Naive thymus-derived CD4-positive, alpha-beta T cell (primary cell): ENCODE measurements at regions of chr10 and their contacts with region 1.

Region 1: GRCh38 chr10:98134431-98135221 is at the start of gene R3HCC1L:
- DNase-seq: peak; percentile 87 to 95 (median 93)
- ATAC-seq: peak; percentile 98
- H3K4me3 ChIP-seq: peak within 1 kb of the TSS; percentile 91
- H3K4me3 Mint-ChIP-seq: peak within 1 kb of the TSS; percentile 78 to 95 (median 86)
- H3K27ac ChIP-seq: peak within 1 kb of the TSS; percentile 96
- H3K27ac Mint-ChIP-seq: peak within 1 kb of the TSS; percentile 71 to 98 (median 96)
- H3K4me1 ChIP-seq: peaks cover 23 to 27% of the 10 kb centered on the region in 2 donors
- H3K4me1 Mint-ChIP-seq: peaks cover 0 to 53% (median 44%) of the 10 kb centered on the region in 7 donors
- H3K27me3 ChIP-seq: no peaks in the 10 kb centered on the region
- H3K27me3 Mint-ChIP-seq: peaks cover 0 to 2% (median 0%) of the 10 kb centered on the region in 5 donors
- total RNA-seq, gene R3HCC1L: 17.6 to 25.3 (median 20.4) TPM

Region 2: GRCh38 chr10:97640174-97640867 is 494.3 kb before region 1 on chr10 and contains the start of gene PI4K2A:
- CTCF ChIA-PET with region 1: no interaction called
- POLR2A ChIA-PET with region 1: no interaction called
- intact Hi-C with region 1: loop called in 1 of 2 experiments (anchors 1 kb)
- DNase-seq: peak; percentile 89 to 99 (median 98)
- ATAC-seq: peak; percentile 98
- H3K4me3 ChIP-seq: peak within 1 kb of the TSS; percentile 82
- H3K4me3 Mint-ChIP-seq: peak within 1 kb of the TSS; percentile 64 to 99 (median 94)
- H3K27ac ChIP-seq: peak within 1 kb of the TSS; percentile 70
- H3K27ac Mint-ChIP-seq: peak within 1 kb of the TSS; percentile 69 to 94 (median 89)
- H3K4me1 ChIP-seq: peaks cover 4 to 15% of the 10 kb centered on the region in 2 donors
- H3K4me1 Mint-ChIP-seq: peaks cover 10 to 34% (median 26%) of the 10 kb centered on the region in 7 donors
- H3K27me3 ChIP-seq: no peaks in the 10 kb centered on the region
- H3K27me3 Mint-ChIP-seq: no peaks in the 10 kb centered on the region
- total RNA-seq, gene PI4K2A: 9.0 to 33.8 (median 11.0) TPM

Region 3: GRCh38 chr10:97849687-97850402 is 284.8 kb before region 1 on chr10 and contains the start of gene GOLGA7B:
- CTCF ChIA-PET with region 1: no interaction called
- POLR2A ChIA-PET with region 1: interaction called, 3 read pairs
- intact Hi-C with region 1: loop called (anchors 1 to 10 kb)
- DNase-seq: peak; percentile 43 to 70 (median 66)
- ATAC-seq: peak; percentile 87
- H3K4me3 ChIP-seq: peak within 1 kb of the TSS; percentile 74
- H3K4me3 Mint-ChIP-seq: peak within 1 kb of the TSS; percentile 84 to 94 (median 90)
- H3K27ac ChIP-seq: peak within 1 kb of the TSS; percentile 61
- H3K27ac Mint-ChIP-seq: peak within 1 kb of the TSS; percentile 70 to 93 (median 87)
- H3K4me1 ChIP-seq: peaks cover 25 to 32% of the 10 kb centered on the region in 2 donors
- H3K4me1 Mint-ChIP-seq: peaks cover 21 to 49% (median 37%) of the 10 kb centered on the region in 7 donors
- H3K27me3 ChIP-seq: no peaks in the 10 kb centered on the region
- H3K27me3 Mint-ChIP-seq: peaks cover 0 to 4% (median 0%) of the 10 kb centered on the region in 5 donors
- total RNA-seq, gene GOLGA7B: 5.8 to 8.5 (median 6.5) TPM

Region 4: DNA sequence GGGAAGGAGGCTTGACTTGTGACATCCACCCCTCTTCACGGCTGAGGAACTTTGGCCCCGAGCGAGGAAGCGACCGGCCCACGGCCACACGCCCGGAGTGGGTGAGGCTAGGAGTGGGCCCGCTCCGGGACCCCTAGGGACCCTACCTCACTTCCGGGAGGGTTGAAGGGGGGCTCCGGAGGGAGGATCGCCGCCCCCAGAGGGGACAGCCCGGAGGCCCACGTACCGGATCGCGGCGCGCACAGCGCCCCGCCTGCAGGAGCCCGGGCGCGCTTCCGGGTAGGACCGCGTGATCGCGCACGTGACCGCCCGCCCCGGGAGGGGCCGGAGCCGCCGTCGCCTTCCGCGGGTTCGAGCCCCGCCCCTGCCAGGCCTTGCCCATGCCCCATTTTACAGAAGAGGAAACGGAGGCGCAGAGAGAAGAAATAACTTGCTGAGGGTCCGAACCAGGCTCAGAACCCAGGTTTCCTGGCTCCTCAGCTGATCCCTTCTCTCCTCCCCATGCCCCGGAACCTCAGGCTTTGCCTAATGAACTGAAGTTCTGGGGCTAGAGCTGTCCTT is 312.1 kb after region 1 on chr10 and contains the start of gene HPS1:
- CTCF ChIA-PET with region 1: no interaction called
- POLR2A ChIA-PET with region 1: no interaction called
- intact Hi-C with region 1: loop called (anchors 2 to 5 kb)
- DNase-seq: peak; percentile 60 to 88 (median 79)
- ATAC-seq: peak; percentile 93
- H3K4me3 ChIP-seq: peak within 1 kb of the TSS; percentile 87
- H3K4me3 Mint-ChIP-seq: peak within 1 kb of the TSS; percentile 76 to 96 (median 92)
- H3K27ac ChIP-seq: peak within 1 kb of the TSS; percentile 88
- H3K27ac Mint-ChIP-seq: peak within 1 kb of the TSS; percentile 75 to 97 (median 89)
- H3K4me1 ChIP-seq: peaks cover 19 to 21% of the 10 kb centered on the region in 2 donors
- H3K4me1 Mint-ChIP-seq: peaks cover 18 to 56% (median 44%) of the 10 kb centered on the region in 7 donors
- H3K27me3 ChIP-seq: no peaks in the 10 kb centered on the region
- H3K27me3 Mint-ChIP-seq: peaks cover 0 to 20% (median 6%) of the 10 kb centered on the region in 5 donors
- total RNA-seq, gene HPS1: 68.5 to 107 (median 90.9) TPM

Region 5: GRCh38 chr10:98467506-98468346 is 333.1 kb after region 1 on chr10:
- CTCF ChIA-PET with region 1: no interaction called
- POLR2A ChIA-PET with region 1: no interaction called
- intact Hi-C with region 1: no loop called
- DNase-seq: peak; percentile 32 to 75 (median 65)
- ATAC-seq: peak; percentile 96
- H3K4me3 ChIP-seq: peak overlapping the region; percentile 92
- H3K4me3 Mint-ChIP-seq: peak overlapping the region; percentile 86 to 100 (median 96)
- H3K27ac ChIP-seq: peak overlapping the region; percentile 45
- H3K27ac Mint-ChIP-seq: peak overlapping the region in 8 of 9 donors; percentile 67 to 93 (median 88)
- H3K4me1 ChIP-seq: no peaks in the 10 kb centered on the region
- H3K4me1 Mint-ChIP-seq: peaks cover 0 to 12% (median 6%) of the 10 kb centered on the region in 7 donors
- H3K27me3 ChIP-seq: no peaks in the 10 kb centered on the region
- H3K27me3 Mint-ChIP-seq: peaks cover 0 to 36% (median 6%) of the 10 kb centered on the region in 5 donors

Region 6: GRCh38 chr10:99732033-99732912 is 1597.6 kb after region 1 on chr10 and contains the starts of genes COX15 and CUTC:
- CTCF ChIA-PET with region 1: no interaction called
- POLR2A ChIA-PET with region 1: interaction called, 6 read pairs
- intact Hi-C with region 1: loop called (anchors 2 to 5 kb)
- DNase-seq: peak; percentile 89 to 95 (median 94)
- ATAC-seq: peak; percentile 95
- H3K4me3 ChIP-seq: peak within 1 kb of the TSS; percentile 94
- H3K4me3 Mint-ChIP-seq: peak within 1 kb of the TSS; percentile 95 to 100 (median 98)
- H3K27ac ChIP-seq: peak within 1 kb of the TSS; percentile 83
- H3K27ac Mint-ChIP-seq: peak within 1 kb of the TSS; percentile 98 to 100 (median 99)
- H3K4me1 ChIP-seq: peaks cover 11 to 19% of the 10 kb centered on the region in 2 donors
- H3K4me1 Mint-ChIP-seq: peaks cover 28 to 79% (median 52%) of the 10 kb centered on the region in 7 donors
- H3K27me3 ChIP-seq: no peaks in the 10 kb centered on the region
- H3K27me3 Mint-ChIP-seq: no peaks in the 10 kb centered on the region
- total RNA-seq, gene COX15: 17.6 to 43.5 (median 32.9) TPM
- total RNA-seq, gene CUTC: 19.3 to 37.1 (median 25.0) TPM